Activated naive CD4-positive, alpha-beta T cell treated with anti-CD3 and anti-CD28 coated beads for 36 hours (primary cell): ENCODE measurements at regions of chr15 and their contacts with region 1.

Region 1: GRCh38 chr15:34101366-34102175 is at the starts of genes EMC7 and PGBD4:
- DNase-seq: peak; percentile 100
- H3K4me3 Mint-ChIP-seq: peak within 1 kb of the TSS; percentile 99
- H3K27ac Mint-ChIP-seq: peak within 1 kb of the TSS; percentile 96
- H3K4me1 Mint-ChIP-seq: peaks cover 28% of the 10 kb centered on the region
- H3K27me3 Mint-ChIP-seq: no peaks in the 10 kb centered on the region
- total RNA-seq, gene EMC7: 51.8 to 56.2 TPM
- total RNA-seq, gene PGBD4: 2.0 TPM

Region 2: GRCh38 chr15:34209421-34210282 is 108.1 kb after region 1 on chr15 and contains the start of gene KATNBL1:
- CTCF ChIA-PET with region 1: interaction called, 68 read pairs
- intact Hi-C with region 1: loop called (anchors 1 kb)
- DNase-seq: peak; percentile 98
- H3K4me3 Mint-ChIP-seq: peak within 1 kb of the TSS; percentile 87
- H3K27ac Mint-ChIP-seq: peak within 1 kb of the TSS; percentile 68
- H3K4me1 Mint-ChIP-seq: peaks cover 24% of the 10 kb centered on the region
- H3K27me3 Mint-ChIP-seq: no peaks in the 10 kb centered on the region
- total RNA-seq, gene KATNBL1: 46.4 to 51.6 TPM

Region 3: GRCh38 chr15:34259566-34259965 is 158.0 kb after region 1 on chr15:
- CTCF ChIA-PET with region 1: no interaction called
- intact Hi-C with region 1: no loop called
- DNase-seq: no peak
- H3K4me3 Mint-ChIP-seq: no peak overlapping the region
- H3K27ac Mint-ChIP-seq: no peak overlapping the region
- H3K4me1 Mint-ChIP-seq: peaks cover 10% of the 10 kb centered on the region
- H3K27me3 Mint-ChIP-seq: no peaks in the 10 kb centered on the region

Region 4: GRCh38 chr15:34337557-34338306 is 236.2 kb after region 1 on chr15 and contains the start of gene SLC12A6:
- CTCF ChIA-PET with region 1: interaction called, 3 read pairs
- intact Hi-C with region 1: loop called (anchors 1 kb)
- DNase-seq: peak; percentile 91
- H3K4me3 Mint-ChIP-seq: peak within 1 kb of the TSS; percentile 95
- H3K27ac Mint-ChIP-seq: peak within 1 kb of the TSS; percentile 97
- H3K4me1 Mint-ChIP-seq: peaks cover 53% of the 10 kb centered on the region
- H3K27me3 Mint-ChIP-seq: no peaks in the 10 kb centered on the region
- total RNA-seq, gene SLC12A6: 24.6 to 28.7 TPM

Region 5: GRCh38 chr15:34587717-34588674 is 486.4 kb after region 1 on chr15:
- CTCF ChIA-PET with region 1: no interaction called
- intact Hi-C with region 1: loop called (anchors 1 kb)
- DNase-seq: peak; percentile 83
- H3K4me3 Mint-ChIP-seq: peak overlapping the region; percentile 74
- H3K27ac Mint-ChIP-seq: peak overlapping the region; percentile 61
- H3K4me1 Mint-ChIP-seq: peaks cover 13% of the 10 kb centered on the region
- H3K27me3 Mint-ChIP-seq: no peaks in the 10 kb centered on the region

Region 6: GRCh38 chr15:34987985-34988873 is 886.7 kb after region 1 on chr15 and contains the start of gene ZNF770:
- CTCF ChIA-PET with region 1: no interaction called
- intact Hi-C with region 1: loop called (anchors 1 kb)
- DNase-seq: peak; percentile 84
- H3K4me3 Mint-ChIP-seq: peak within 1 kb of the TSS; percentile 97
- H3K27ac Mint-ChIP-seq: peak within 1 kb of the TSS; percentile 99
- H3K4me1 Mint-ChIP-seq: peaks cover 28% of the 10 kb centered on the region
- H3K27me3 Mint-ChIP-seq: no peaks in the 10 kb centered on the region
- total RNA-seq, gene ZNF770: 36.4 to 39.4 TPM